Lower leg skin (tissue), 4 donors: ENCODE measurements at regions of chr13 and their contacts with region 1.

Region 1: GRCh38 chr13:83992566-83993358 is 110.5 kb upstream of the SLITRK1 start:
- DNase-seq: no peak
- H3K4me3 ChIP-seq: no peak overlapping the region
- CTCF ChIP-seq: no peak
- POLR2A ChIP-seq: no peak

Region 2: GRCh38 chr13:83943530-83944279 is 49.1 kb before region 1 on chr13:
- intact Hi-C with region 1: no loop called
- DNase-seq: no peak
- H3K4me3 ChIP-seq: no peak overlapping the region
- CTCF ChIP-seq: no peak
- POLR2A ChIP-seq: no peak

Region 3: DNA sequence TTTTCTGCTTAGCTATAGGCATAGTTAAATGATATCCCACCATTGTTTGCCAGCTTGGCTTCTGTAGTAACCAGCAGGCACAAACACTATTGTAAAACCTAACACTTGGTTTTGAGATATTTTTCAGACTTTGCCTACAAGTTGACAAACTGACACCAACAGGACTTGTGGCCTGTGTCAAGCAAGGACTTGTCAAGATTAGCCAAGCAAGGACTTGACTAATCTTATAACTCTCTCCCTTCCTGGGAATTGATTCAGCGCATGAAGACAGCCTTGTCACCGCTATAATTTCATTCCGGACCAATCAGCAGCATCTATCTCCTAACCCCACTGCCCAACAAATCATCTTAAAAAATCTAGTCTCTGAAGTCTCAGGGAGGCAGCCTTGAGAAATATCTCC is 37.8 kb before region 1 on chr13:
- intact Hi-C with region 1: loop called (anchors 2 kb)
- DNase-seq: no peak
- H3K4me3 ChIP-seq: no peak overlapping the region
- CTCF ChIP-seq: no peak
- POLR2A ChIP-seq: no peak